ENCODE measurements at regions of chr15 and their contacts with region 1.

Region 1: DNA sequence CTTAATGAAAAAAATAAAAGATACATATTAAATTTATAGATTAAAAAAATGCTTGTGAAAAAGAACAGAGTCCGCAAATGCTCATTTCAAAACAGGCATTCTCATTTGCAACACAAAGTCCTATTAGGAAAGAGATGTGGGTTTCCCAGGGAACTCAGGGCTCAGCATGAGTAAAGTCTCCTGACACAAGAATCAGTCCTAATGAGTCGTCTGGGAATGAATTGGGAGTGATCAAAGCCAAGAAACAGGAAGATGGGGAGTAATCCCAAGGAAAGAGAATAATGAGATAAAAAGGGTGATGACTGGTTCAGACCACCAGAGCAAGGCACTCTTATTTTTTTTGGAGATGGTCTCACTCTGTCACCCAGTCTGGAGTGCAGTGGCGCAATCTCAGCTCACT is 443.7 kb downstream of the NR2F2 start:
- DNase-seq: no peak

Region 2: DNA sequence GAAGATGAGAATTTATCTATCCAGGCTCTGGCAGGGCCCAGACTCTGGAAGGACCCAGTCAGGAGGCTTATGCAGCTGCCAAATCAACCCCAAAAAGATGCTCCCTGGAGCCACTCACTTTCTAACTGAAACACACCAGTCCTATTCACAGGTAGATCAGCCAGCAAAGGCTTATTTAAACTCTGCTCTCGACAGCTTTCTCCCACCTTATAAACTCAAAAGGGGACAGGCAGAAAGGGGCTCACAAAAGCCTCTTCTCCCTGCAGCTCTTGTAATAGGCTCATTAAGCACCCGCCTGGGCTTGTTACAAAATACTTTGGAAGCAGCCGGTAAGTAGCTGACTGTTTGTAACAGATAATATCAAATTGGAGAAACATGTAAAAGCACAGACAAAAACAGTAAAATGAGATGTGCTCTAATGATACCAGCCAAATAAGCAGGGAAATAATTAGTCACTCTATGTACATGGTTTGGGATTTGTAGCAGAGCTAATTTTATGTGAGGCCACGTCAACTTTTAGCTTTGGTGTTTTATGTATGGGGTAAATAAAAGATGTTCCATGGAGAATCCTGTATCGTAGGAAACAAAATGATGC is 230.0 kb before region 1 on chr15:
- intact Hi-C with region 1: no loop called
- DNase-seq: no peak

Region 3: GRCh38 chr15:96804754-96805153 is 30.5 kb after region 1 on chr15:
- intact Hi-C with region 1: loop called in 1 of 2 experiments (anchors 2 kb)
- DNase-seq: no peak

Region 4: DNA sequence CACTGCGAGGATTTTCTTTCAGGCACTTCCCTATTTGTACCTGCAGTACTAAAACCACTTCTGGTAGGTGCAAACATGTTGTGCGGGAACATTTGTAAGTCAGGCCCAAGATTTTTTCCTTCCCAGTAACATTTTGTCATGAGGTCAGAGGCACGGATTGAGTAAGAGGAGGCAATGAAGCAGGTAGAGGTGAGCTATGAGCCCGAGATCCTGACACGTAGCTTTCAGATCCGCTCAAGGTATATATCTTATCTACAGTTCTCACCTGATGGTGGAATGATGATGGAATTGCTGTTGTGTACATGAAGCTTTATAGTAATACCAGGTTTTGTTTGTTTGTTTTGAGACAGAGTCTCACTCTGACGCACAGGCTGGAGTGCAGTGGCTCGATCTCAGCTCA is 53.8 kb after region 1 on chr15:
- intact Hi-C with region 1: no loop called
- DNase-seq: no peak